Esophagus squamous epithelium (tissue), 5 donors: ENCODE measurements at regions of chr19 and their contacts with region 1.

Region 1: GRCh38 chr19:33302175-33302973 is at the start of gene CEBPA:
- DNase-seq: no peak
- H3K4me3 ChIP-seq: peak within 1 kb of the TSS; percentile 78 to 94 (median 87)
- H3K27ac ChIP-seq: peak within 1 kb of the TSS; percentile 89 to 95 (median 90)
- H3K4me1 ChIP-seq: peaks cover 37 to 73% (median 41%) of the 10 kb centered on the region in 3 donors
- H3K27me3 ChIP-seq: peaks cover 0 to 34% (median 0%) of the 10 kb centered on the region in 4 donors
- CTCF ChIP-seq: peak in 4 of 6 experiments; percentile 63 to 85 (median 78)
- POLR2A ChIP-seq: peak in 3 of 4 donors; percentile 86 to 98 (median 97)
- total RNA-seq, gene CEBPA: 27.1 to 33.5 (median 31.5) TPM

Region 2: DNA sequence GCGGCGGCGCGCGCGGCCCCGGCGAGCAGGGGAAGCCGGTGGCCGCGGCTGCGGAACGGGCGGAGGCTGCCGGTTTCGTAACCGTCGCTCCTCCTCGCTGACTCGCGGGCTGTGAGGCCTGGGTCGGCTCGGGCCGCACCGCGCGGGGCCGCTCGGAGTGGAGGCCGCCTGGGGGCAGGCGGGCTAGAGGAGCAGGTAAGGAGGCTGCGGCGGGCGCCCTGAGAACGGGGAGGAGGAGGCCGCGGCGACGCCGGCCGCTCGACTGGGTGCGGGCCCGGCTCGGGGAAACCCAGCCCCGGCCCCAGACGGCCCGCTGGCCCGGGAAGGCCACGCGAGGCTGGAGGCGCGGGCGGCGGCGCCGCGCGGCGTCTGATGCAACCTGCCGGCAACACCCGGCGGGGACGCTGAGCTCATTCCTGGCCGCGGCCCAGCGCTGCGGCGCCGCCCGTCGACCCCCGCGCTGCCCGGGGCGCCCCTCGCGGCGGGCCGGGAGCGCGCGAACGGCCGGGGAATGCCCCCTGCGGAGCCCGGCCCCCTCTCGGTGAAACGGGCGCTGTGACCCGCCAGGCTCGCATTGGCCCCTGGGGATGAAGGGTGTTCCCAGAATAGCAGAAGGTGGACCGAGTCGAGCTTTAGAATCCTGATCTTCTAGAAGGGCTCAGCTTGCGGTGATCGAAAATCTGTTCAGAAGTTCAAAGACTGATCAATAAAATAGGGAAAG is 71.5 kb after region 1 on chr19 and contains the start of gene CEBPG:
- intact Hi-C with region 1: loop called (anchors 5 kb)
- DNase-seq: no peak
- H3K4me3 ChIP-seq: peak within 1 kb of the TSS; percentile 80 to 90 (median 86)
- H3K27ac ChIP-seq: peak within 1 kb of the TSS; percentile 97 to 99 (median 99)
- H3K4me1 ChIP-seq: peaks cover 15 to 69% (median 45%) of the 10 kb centered on the region in 3 donors
- H3K27me3 ChIP-seq: no peaks in the 10 kb centered on the region
- CTCF ChIP-seq: peak in 3 of 6 experiments; percentile 18 to 44 (median 34)
- POLR2A ChIP-seq: peak in 3 of 4 donors; percentile 86 to 96 (median 87)
- total RNA-seq, gene CEBPG: 18.5 to 31.6 (median 26.8) TPM